ENCODE measurements at regions of chr16 and their contacts with region 1.

Region 1: DNA sequence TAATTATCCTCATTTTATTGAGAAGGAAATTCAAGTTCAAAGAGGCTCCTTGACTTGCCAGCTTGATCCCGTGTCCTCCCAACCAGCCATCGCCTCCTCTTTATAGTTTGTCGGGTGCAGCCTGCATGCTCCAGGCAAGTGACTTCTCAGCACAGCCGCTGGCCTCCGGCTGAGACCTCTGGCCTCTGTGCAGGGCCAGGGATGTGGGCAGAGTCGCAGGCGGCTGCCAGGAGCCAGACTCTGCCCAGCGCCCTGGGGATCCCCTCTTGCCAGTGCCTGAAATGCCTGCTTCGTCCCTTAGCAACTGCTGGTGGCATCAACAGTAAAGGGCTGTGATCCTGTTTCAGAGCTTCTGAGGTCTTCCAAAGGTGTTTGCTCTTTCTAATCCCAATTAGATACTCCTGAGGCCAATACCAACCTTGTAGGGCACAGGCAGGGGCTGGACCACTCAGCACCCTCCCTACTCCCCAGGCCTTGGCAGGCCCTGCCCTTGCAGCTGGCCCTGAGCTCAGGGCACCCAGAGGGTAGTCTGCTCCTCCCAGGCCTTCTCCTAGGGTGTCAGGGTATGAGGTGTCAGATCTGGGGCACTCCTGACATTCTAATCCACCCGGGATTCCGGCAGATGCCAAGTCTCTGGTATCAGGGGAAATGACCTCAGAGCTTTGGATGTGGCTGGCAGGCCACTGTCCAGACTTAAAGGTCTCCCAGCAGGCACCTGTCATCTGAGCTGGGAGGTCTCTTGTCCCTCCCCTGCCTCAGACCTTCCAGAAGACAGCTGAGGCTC is 68.0 kb upstream of the SIAH1 start:
- DNase-seq: no peak
- H3K4me3 Mint-ChIP-seq: no peak overlapping the region
- H3K27ac Mint-ChIP-seq: no peak overlapping the region
- H3K4me1 Mint-ChIP-seq: peaks cover 7% of the 10 kb centered on the region
- H3K27me3 Mint-ChIP-seq: peaks cover 16% of the 10 kb centered on the region

Region 2: DNA sequence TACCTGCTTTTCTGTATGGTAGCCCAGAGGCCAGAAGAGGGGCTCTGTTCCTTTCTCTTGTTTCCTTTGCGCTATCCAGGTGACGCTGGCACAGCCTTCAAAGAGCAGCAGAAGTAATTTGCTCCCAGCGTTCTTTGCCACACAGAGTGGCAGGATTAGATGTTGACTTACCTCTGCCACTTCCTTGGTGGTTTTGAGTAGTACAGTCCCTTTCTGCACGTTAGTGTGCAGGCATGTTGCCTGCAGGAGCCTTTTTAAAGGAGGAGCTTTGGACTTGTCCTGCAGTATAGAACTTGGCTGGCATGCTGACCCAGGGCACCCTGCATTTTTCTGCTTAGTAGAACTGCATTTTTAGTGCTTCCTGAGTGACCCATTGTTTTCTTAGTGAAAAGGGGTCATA is 205.9 kb before region 1 on chr16 and contains the start of gene ABCC11:
- CTCF ChIA-PET with region 1: no interaction called
- POLR2A ChIA-PET with region 1: no interaction called
- intact Hi-C with region 1: no loop called
- DNase-seq: no peak
- H3K4me3 Mint-ChIP-seq: no peak within 1 kb of the TSS
- H3K27ac Mint-ChIP-seq: no peak within 1 kb of the TSS
- H3K4me1 Mint-ChIP-seq: peaks cover 42% of the 10 kb centered on the region
- H3K27me3 Mint-ChIP-seq: no peaks in the 10 kb centered on the region
- total RNA-seq, gene ABCC11: 0.15 to 0.33 TPM

Region 3: GRCh38 chr16:48359983-48360382 is 93.2 kb before region 1 on chr16:
- CTCF ChIA-PET with region 1: no interaction called
- POLR2A ChIA-PET with region 1: no interaction called
- intact Hi-C with region 1: no loop called
- DNase-seq: no peak
- H3K4me3 Mint-ChIP-seq: no peak overlapping the region
- H3K27ac Mint-ChIP-seq: no peak overlapping the region
- H3K4me1 Mint-ChIP-seq: peaks cover 18% of the 10 kb centered on the region
- H3K27me3 Mint-ChIP-seq: no peaks in the 10 kb centered on the region

Region 4: DNA sequence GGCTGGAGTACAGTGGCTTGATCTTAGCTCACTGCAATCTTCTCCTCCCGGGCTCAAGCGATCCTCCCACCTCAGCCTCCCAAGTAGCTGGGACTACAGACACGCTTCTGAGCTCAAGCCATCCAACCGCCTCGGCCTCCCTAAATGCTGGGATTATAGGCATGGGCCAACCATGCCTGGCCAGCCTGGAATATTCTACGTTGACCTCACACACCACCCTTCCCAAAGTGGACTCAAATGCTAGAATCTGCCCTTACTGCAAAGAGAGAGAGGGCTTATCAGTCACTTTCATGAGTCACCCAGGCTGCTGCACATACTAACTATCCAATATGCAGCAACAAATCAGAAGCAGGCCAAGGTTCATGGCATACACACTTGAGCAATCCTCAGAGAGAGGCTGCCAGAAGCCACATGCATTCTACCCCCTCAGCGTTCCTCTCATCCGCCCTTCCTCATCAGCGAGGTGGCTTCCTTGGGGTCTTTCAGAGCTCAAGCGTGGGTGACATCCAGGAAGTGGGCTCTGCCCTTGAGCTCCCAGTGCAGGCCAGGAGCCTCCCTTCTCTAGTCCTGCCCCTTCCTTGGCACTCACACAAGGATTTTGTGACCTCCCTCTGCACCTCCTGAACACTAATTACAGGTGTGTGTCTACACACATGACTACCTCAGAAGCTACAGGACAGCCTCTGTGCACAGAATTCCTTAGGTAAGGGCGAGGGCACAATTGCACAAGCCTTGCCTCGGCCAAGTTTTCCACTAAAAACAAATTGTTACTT is 43.1 kb before region 1 on chr16:
- CTCF ChIA-PET with region 1: interaction called, 3 read pairs
- POLR2A ChIA-PET with region 1: no interaction called
- intact Hi-C with region 1: loop called (anchors 1 kb)
- DNase-seq: no peak
- H3K4me3 Mint-ChIP-seq: no peak overlapping the region
- H3K27ac Mint-ChIP-seq: no peak overlapping the region
- H3K4me1 Mint-ChIP-seq: peaks cover 6% of the 10 kb centered on the region
- H3K27me3 Mint-ChIP-seq: peaks cover 8% of the 10 kb centered on the region

Region 5: GRCh38 chr16:48479955-48480354 is 26.8 kb after region 1 on chr16:
- CTCF ChIA-PET with region 1: no interaction called
- POLR2A ChIA-PET with region 1: no interaction called
- intact Hi-C with region 1: no loop called
- DNase-seq: no peak
- H3K4me3 Mint-ChIP-seq: no peak overlapping the region
- H3K27ac Mint-ChIP-seq: no peak overlapping the region
- H3K4me1 Mint-ChIP-seq: peaks cover 4% of the 10 kb centered on the region
- H3K27me3 Mint-ChIP-seq: peaks cover 21% of the 10 kb centered on the region

Measured in activated CD4-positive, alpha-beta memory T cell treated with anti-CD3 and anti-CD28 coated beads for 36 hours (primary cell).